K562 (cell line): ENCODE measurements at regions of chr6 and their contacts with region 1.

Region 1: GRCh38 chr6:33904050-33904746 is 100.4 kb upstream of the MLN start:
- DNase-seq: peak; percentile 86 to 91 (median 90)
- ATAC-seq: peak; percentile 85
- H3K4me3 ChIP-seq: peak overlapping the region; percentile 4; the same call in 1 of the 2 replicates
- H3K27ac ChIP-seq: peak overlapping the region; percentile 46
- H3K4me1 ChIP-seq: peaks cover 47 to 51% of the 10 kb centered on the region in 2 experiments; a peak in 4 of 5 replicates
- H3K27me3 ChIP-seq: 0 out of 5 replicates have a peak, but pooled peaks cover 0 to 2% of the 10 kb centered on the region in 2 experiments
- CTCF ChIP-seq: no peak
- EP300 ChIP-seq: no peak
- POLR2A ChIP-seq: no peak; the same call in 1 of the 2 replicates
- RAD21 ChIP-seq: no peak

Region 2: DNA sequence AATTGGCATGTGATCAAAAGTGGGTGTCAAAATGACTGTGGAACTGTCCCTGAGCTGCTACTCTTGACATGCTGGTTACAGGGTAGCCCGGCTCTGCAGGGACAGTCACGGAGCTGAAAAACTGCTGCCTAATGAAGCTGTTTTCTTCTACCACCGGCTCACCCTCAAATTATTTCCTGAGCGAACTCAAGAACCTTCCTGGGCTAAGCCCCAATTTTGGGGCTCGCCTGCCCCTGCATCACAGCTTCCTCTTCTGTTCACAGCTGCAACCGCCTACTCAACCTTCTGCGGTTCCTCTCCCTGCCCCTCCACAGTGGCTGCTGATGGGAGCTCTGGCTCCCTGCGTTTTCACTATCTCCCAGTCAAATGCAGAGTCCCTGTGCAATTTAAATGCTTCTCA is 10.4 kb after region 1 on chr6:
- CTCF ChIA-PET with region 1: no interaction called
- POLR2A ChIA-PET with region 1: interaction called, 13 read pairs
- in situ Hi-C with region 1: no loop called
- intact Hi-C with region 1: no loop called
- DNase-seq: no peak
- ATAC-seq: 0 out of 3 replicates have a peak, but pooled peaks have one; percentile 26
- H3K4me3 ChIP-seq: no peak overlapping the region
- H3K27ac ChIP-seq: no peak overlapping the region
- H3K4me1 ChIP-seq: peaks cover 6 to 9% of the 10 kb centered on the region in 2 experiments; a peak in 3 of 5 replicates
- H3K27me3 ChIP-seq: peaks cover 16 to 32% of the 10 kb centered on the region in 2 experiments
- CTCF ChIP-seq: no peak
- EP300 ChIP-seq: no peak
- POLR2A ChIP-seq: no peak
- RAD21 ChIP-seq: no peak

Region 3: DNA sequence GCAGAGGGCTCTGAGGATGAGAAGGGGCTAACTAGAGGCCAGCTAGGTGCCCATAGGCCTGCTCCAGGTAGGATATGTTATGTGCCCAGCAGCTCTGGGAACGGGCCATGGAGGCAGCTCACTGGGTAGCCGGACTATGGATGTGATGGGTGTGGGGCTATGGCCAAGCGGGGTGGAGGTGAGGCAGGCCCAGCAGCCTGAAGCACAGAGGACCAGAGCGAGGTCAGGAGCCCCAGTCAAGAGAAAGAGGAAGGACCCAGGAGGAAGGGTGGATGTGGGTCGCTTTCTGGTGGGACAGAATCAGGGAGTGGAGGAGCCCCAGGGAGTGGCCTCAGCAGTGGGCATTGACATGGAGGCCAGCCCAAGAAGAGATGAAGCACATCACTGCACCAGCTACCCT is 17.5 kb after region 1 on chr6:
- CTCF ChIA-PET with region 1: no interaction called
- POLR2A ChIA-PET with region 1: interaction called, 12 read pairs
- in situ Hi-C with region 1: no loop called
- intact Hi-C with region 1: no loop called
- DNase-seq: no peak
- ATAC-seq: no peak
- H3K4me3 ChIP-seq: no peak overlapping the region
- H3K27ac ChIP-seq: no peak overlapping the region
- H3K4me1 ChIP-seq: peaks cover 0 to 7% of the 10 kb centered on the region in 2 experiments; a peak in 2 of 5 replicates
- H3K27me3 ChIP-seq: peaks cover 3 to 21% of the 10 kb centered on the region in 2 experiments; a peak in 3 of 5 replicates
- CTCF ChIP-seq: no peak
- EP300 ChIP-seq: no peak
- POLR2A ChIP-seq: no peak
- RAD21 ChIP-seq: no peak